ENCODE measurements at regions of chr14 and their contacts with region 1.

Region 1: GRCh38 chr14:102737402-102738362 is 39.6 kb upstream of the TRAF3 start:
- DNase-seq: no peak
- ATAC-seq: no peak
- H3K4me3 Mint-ChIP-seq: no peak overlapping the region
- H3K27ac Mint-ChIP-seq: no peak overlapping the region
- H3K4me1 Mint-ChIP-seq: peaks cover 3% of the 10 kb centered on the region
- H3K27me3 Mint-ChIP-seq: no peaks in the 10 kb centered on the region

Region 2: DNA sequence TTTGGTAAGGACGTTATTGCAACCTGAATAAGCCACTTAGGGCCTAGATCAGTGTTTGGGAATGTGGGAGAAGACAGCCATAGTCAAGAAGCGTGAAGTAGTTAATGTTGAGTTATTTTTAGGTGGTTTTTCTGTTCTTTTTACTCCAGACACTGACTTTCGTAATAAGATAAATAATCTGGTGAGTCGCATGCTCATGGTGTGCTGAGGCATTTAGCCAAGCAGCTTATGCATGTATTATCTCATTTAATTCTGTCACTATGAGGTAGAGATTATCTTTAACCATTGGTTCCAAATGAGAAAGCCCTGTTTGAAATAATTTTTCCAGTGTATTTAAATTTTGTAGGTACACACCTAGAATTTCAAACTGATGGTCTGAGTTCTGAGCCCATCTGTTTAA is 77.9 kb before region 1 on chr14:
- POLR2A ChIA-PET with region 1: no interaction called
- DNase-seq: no peak
- ATAC-seq: no peak
- H3K4me3 Mint-ChIP-seq: no peak overlapping the region
- H3K27ac Mint-ChIP-seq: no peak overlapping the region
- H3K4me1 Mint-ChIP-seq: peaks cover 4% of the 10 kb centered on the region
- H3K27me3 Mint-ChIP-seq: no peaks in the 10 kb centered on the region

Region 3: DNA sequence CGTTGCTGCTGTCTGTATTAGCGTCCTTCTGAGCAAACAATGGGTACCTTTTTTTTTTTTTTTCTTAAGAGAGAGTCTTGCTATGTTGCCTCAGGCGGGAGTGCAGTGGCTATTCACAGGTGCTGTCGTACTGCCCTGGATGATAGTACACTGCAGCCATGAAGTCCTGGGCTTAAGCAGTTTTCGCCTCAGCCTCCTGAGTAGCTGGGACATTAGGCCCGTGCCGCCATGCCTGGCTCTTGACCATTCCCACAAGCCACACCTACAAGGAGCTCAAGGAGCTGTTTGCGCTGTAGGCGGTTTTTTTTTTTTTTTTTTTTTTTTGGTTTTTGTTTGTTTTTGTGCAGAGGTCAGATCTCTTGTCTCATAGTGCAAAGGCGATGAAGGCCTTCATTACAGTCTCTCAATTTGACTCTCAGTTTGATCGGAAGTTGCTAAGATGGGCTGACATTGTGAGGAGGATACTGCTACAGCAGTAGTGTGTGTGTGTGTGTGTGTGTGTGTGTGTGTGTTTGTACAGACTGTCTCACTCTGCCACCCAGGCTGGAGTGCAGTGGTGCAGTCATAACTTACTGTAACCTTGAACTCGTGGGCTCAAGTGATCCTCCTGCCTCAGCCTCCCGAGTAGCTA is 73.7 kb after region 1 on chr14:
- POLR2A ChIA-PET with region 1: interaction called, 10 read pairs
- DNase-seq: no peak
- ATAC-seq: no peak
- H3K4me3 Mint-ChIP-seq: no peak overlapping the region
- H3K27ac Mint-ChIP-seq: no peak overlapping the region
- H3K4me1 Mint-ChIP-seq: peaks cover 27% of the 10 kb centered on the region
- H3K27me3 Mint-ChIP-seq: no peaks in the 10 kb centered on the region

Measured in activated naive CD8-positive, alpha-beta T cell treated with anti-CD3 and anti-CD28 coated beads, Interleukin-2, amount 10 ng/mL, durations not matched to agents 7 days and 5 days (primary cell).